Posterior cingulate gyrus (tissue), 11 donors: ENCODE measurements at regions of chr19 and their contacts with region 1.

Region 1: DNA sequence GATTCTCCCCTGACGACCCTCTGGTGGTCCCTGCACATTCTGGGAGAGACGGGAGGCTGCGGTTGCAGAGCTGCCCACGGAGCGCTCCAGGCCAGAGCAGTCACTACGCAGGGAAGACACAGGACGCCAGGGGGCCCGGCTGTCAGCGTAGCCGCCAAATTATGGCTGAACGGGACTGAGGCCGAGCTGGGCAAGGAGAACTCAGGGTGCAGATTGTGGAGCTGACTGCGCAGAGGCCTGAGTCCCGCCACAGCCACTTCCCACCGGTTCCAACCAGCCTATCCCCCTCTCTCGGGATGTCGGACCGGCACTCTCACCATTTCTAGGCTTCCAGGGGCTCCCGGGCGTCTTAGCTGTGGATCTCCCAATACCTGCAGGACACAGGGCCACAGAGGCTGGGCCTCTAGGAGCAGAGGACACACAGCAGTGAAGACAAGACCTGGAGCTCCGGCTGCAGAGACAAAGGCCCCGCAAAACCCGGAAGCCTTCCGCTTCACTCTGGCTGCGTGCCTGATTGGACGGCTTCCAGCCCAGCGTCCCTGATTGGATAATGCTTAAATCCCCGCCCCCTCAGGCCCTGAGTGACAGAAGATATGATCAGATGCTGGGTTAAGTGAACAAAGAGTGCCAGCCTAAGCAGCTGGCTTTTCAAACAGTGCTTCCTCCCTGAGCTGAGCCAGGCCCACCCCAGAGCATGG is at the start of gene ZNF737:
- DNase-seq: peak; percentile 88 to 99 (median 98)

Region 2: GRCh38 chr19:20444202-20444885 is 121.1 kb before region 1 on chr19:
- intact Hi-C with region 1: no loop called
- DNase-seq: no peak

Region 3: GRCh38 chr19:20503476-20503875 is 62.0 kb before region 1 on chr19:
- intact Hi-C with region 1: no loop called
- DNase-seq: no peak

Region 4: GRCh38 chr19:20661150-20661819 is 95.8 kb after region 1 on chr19 and contains the start of gene ZNF626:
- intact Hi-C with region 1: loop called (anchors 2 kb)
- DNase-seq: peak; percentile 92 to 99 (median 95)

Region 5: GRCh38 chr19:20776083-20777076 is 210.9 kb after region 1 on chr19 and contains the start of gene ZNF66:
- intact Hi-C with region 1: loop called (anchors 5 kb)
- DNase-seq: peak; percentile 93 to 100 (median 98)

Region 6: DNA sequence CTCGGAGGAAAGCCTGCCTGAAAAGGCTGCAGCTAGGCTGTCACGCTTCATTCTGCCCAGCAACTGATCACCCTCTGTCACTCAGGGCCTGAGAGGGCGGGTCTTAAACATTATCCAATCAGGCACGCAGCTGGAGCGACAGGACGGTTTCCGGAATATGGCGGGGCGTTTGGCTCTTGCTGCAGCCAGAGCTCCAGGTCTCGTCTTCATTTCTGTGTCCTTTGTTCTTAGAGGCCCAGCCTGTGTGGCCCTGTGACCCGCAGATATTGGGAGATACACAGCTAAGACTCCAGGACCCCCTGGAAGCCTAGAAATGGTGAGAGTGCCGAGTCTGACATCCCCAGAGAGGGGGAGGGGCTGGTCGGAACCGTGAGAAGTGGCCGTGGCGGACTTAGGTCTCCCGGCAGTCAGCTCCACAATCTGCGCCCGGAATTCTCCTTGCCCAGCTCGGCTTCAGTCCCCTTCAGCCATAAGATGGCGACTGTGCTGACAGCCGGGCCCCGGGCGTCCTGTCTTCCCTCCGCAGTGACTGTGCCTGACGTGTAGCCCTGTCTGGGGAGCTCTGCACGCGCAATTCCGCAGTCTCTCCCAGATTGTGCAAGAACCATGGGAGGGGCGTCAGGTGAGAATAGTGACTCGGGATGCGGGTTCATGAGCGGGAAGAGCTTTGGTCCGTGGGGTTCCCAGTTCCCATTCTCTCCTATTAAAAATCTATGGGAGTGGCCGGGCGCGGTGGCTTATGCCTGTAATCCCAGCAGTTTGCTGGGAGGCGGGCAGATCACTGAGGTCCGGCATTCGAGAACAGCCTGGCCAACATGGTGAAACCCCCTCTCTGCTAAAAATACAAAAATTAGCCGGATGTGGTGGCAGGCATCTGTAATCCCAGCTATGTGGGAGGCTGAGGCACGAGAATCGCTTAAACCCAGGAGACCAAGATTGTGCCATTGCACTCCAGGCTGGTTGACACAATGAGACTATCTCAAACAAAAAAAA is 940.3 kb after region 1 on chr19 and contains the start of gene ZNF429:
- intact Hi-C with region 1: loop called (anchors 10 kb)
- DNase-seq: peak; percentile 86 to 99 (median 94)